Psoas muscle (tissue), 8 donors: ENCODE measurements at regions of chr17 and their contacts with region 1.

Region 1: GRCh38 chr17:39636927-39637736 is at the start of gene STARD3:
- DNase-seq: peak; percentile 93 to 96
- ATAC-seq: peak; percentile 95 to 98 (median 96)
- H3K4me3 ChIP-seq: peak within 1 kb of the TSS; percentile 96
- H3K27ac ChIP-seq: peak within 1 kb of the TSS; percentile 97
- H3K4me1 ChIP-seq: peaks cover 44% of the 10 kb centered on the region
- H3K27me3 ChIP-seq: peaks cover 0 to 2% (median 0%) of the 10 kb centered on the region in 3 donors
- CTCF ChIP-seq: no peak
- total RNA-seq, gene STARD3: 22.5 to 32.6 (median 26.1) TPM

Region 2: GRCh38 chr17:39659279-39660010 is 22.3 kb after region 1 on chr17:
- intact Hi-C with region 1: loop called in 1 of 2 experiments (anchors 2 kb)
- DNase-seq: no peak
- ATAC-seq: no peak
- H3K4me3 ChIP-seq: peak overlapping the region; percentile 11
- H3K27ac ChIP-seq: peak overlapping the region; percentile 96
- H3K4me1 ChIP-seq: peaks cover 49% of the 10 kb centered on the region
- H3K27me3 ChIP-seq: no peaks in the 10 kb centered on the region
- CTCF ChIP-seq: no peak

Region 3: DNA sequence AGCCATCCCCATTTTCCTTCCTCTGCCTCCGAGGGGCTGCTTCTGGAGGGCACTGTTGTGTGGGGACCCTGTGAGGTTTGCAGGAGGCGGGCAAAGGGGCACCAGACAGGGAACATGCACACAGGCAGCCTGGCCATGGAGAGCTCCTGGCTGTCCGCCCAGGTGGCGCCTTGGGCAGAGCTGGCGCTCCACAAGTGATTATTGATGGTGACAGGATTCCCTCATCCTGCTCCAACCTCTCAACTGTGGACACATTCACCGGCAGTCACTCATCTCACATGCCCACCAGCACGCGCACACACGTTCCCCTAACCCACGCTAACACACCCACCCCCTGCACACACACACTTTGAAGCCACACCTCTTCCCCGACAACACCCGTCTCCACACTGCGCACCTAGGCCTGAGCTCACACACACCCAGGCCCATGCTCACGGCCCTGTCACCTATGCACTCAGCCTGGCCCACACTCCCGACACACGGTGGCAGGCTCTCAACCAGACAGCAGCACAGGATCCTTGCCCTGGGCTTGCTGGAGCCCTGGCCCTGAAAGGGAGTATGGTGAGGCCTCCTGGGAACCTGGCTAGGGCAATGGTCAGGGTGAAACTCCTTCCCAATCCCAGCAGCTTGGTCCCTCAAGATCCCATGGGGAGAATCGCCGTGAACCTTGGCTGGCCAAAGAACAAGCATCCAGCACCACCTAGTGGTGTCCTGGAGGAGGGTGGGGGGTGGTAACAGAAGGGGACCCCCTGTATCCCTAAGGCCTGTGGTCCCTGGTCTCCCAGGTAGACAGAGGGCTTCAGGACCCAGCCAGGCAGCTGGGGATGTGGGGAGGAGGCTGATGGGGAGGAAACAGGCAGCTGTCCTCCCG is 34.8 kb after region 1 on chr17:
- intact Hi-C with region 1: loop called in 1 of 2 experiments (anchors 5 kb)
- DNase-seq: peak in 1 of 2 donors; percentile 70
- ATAC-seq: peak; percentile 26 to 41 (median 32)
- H3K4me3 ChIP-seq: no peak overlapping the region
- H3K27ac ChIP-seq: peak overlapping the region; percentile 96
- H3K4me1 ChIP-seq: peaks cover 44% of the 10 kb centered on the region
- H3K27me3 ChIP-seq: no peaks in the 10 kb centered on the region
- CTCF ChIP-seq: peak; percentile 56